ENCODE measurements at regions of chr16 and their contacts with region 1.

Region 1: DNA sequence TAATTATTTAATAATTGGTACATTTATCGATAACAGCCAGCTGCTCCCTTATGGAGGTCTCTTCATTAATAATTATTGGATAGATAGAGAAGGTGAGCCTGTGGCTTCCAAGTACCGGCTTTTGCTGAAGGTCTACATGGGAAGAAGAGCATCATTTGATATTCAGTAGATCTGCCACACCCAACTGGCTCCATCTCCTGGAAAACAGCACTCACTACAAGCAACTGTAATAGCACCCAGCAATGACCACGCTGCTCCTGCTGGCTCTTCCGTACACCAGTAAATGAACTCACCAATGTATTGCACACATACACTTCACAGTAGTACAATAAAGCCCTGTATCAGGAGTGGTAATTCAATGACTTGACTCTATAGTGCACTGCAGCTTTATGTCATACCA is 19.5 kb downstream of the MARVELD3 start:
- DNase-seq: peak; percentile 22
- ATAC-seq: peak; percentile 81
- H3K4me3 ChIP-seq: no peak overlapping the region
- H3K27ac ChIP-seq: no peak overlapping the region
- H3K4me1 ChIP-seq: no peaks in the 10 kb centered on the region
- H3K27me3 ChIP-seq: no peaks in the 10 kb centered on the region
- CTCF ChIP-seq: peak; percentile 66

Region 2: DNA sequence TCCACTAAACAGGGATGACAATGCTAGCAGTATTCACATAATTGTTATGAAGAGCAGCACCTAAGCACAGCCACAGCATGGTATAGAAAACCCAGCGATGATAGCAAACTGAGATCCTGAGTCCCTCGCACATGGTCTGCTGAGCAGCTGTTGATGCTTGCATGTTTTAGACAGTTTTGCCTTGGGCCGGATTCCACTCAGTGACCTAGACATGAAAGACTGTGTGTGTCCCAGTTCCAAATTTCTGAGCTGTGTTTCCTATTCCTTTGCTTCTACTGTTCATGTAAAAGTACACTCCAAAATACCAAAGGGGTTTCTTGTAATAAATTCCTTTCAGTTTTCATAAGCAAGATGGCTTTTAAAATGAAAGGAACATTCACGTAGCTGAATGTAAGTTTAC is 325.5 kb before region 1 on chr16:
- CTCF ChIA-PET with region 1: no interaction called
- POLR2A ChIA-PET with region 1: no interaction called
- in situ Hi-C with region 1: no loop called
- intact Hi-C with region 1: no loop called
- DNase-seq: no peak
- ATAC-seq: no peak
- H3K4me3 ChIP-seq: no peak overlapping the region
- H3K27ac ChIP-seq: no peak overlapping the region
- H3K4me1 ChIP-seq: no peaks in the 10 kb centered on the region
- H3K27me3 ChIP-seq: no peaks in the 10 kb centered on the region; the same call in 1 of the 2 replicates
- CTCF ChIP-seq: no peak

Region 3: GRCh38 chr16:71700831-71701230 is 55.4 kb after region 1 on chr16:
- CTCF ChIA-PET with region 1: no interaction called
- POLR2A ChIA-PET with region 1: interaction called, 16 read pairs
- in situ Hi-C with region 1: no loop called
- intact Hi-C with region 1: no loop called
- DNase-seq: no peak
- ATAC-seq: no peak; the same call in 1 of the 2 replicates
- H3K4me3 ChIP-seq: no peak overlapping the region
- H3K27ac ChIP-seq: no peak overlapping the region
- H3K4me1 ChIP-seq: no peaks in the 10 kb centered on the region
- H3K27me3 ChIP-seq: no peaks in the 10 kb centered on the region
- CTCF ChIP-seq: no peak